Heart right ventricle (tissue), 16 donors: ENCODE measurements at regions of chr1 and their contacts with region 1.

Region 1: GRCh38 chr1:109539676-109540075 is at the start of gene GPR61:
- DNase-seq: no peak
- ATAC-seq: no peak
- H3K4me3 ChIP-seq: no peak within 1 kb of the TSS
- H3K27ac ChIP-seq: no peak within 1 kb of the TSS
- H3K4me1 ChIP-seq: peaks cover 0 to 31% (median 9%) of the 10 kb centered on the region in 9 donors
- H3K27me3 ChIP-seq: no peaks in the 10 kb centered on the region
- CTCF ChIP-seq: no peak
- total RNA-seq, gene GPR61: 0.11 to 1.0 (median 0.31) TPM in 8 of 10 donors, not detected in the others

Region 2: GRCh38 chr1:109620841-109621286 is 81.2 kb after region 1 on chr1:
- intact Hi-C with region 1: loop called in 2 of 10 experiments (anchors 5 kb)
- DNase-seq: peak; percentile 93 to 94
- ATAC-seq: peak; percentile 75 to 90 (median 84)
- H3K4me3 ChIP-seq: peak overlapping the region; percentile 45 to 77 (median 72)
- H3K27ac ChIP-seq: peak overlapping the region; percentile 1 to 97 (median 84)
- H3K4me1 ChIP-seq: peaks cover 9 to 77% (median 57%) of the 10 kb centered on the region in 9 donors
- H3K27me3 ChIP-seq: no peaks in the 10 kb centered on the region
- CTCF ChIP-seq: no peak

Region 3: DNA sequence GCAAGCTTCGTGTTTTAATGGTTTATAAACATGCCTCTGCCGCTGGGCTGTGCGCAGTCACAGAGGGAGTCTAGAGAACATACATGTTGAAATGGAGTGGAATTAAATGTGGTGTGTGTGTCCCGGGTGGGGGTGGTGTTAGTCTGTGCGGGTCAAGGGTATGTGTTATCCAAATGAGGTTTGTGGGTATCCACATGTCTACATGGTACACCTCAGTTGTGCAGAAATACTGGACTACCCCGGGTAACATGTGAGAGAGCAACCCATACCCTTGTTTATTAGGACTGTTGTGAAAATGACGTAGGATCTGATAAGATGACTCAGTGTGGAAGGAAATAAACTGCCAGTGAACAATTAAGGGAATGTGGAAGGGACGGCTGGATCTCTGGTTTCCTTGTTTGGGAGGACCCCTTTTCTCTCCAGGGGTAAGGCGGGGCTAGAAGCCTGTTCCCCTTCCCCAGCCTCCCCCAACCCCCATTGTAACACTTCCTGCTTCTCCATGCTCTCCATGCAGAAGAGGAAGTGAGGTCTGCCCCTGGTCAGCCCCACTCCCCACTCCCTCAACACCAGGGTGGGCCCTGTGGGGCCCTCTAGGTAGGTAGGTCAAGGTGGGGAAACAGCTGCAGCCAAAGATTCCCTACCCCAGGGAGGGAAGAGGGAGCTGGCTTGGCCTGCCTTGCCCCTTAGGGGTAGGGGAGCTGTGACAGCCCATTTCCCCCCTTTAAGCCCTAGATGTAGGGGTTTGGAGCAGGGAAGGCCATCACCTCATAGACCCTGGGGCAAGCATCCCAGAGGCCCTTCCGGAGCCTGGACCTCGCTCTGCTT is 223.4 kb after region 1 on chr1:
- intact Hi-C with region 1: loop called in 1 of 10 experiments (anchors 5 kb)
- DNase-seq: peak in 1 of 2 donors; percentile 5
- ATAC-seq: peak in 2 of 8 donors; percentile 2 to 10
- H3K4me3 ChIP-seq: no peak overlapping the region
- H3K27ac ChIP-seq: peak overlapping the region in 2 of 10 donors; percentile 39 to 73
- H3K4me1 ChIP-seq: peaks cover 0 to 33% (median 12%) of the 10 kb centered on the region in 9 donors
- H3K27me3 ChIP-seq: no peaks in the 10 kb centered on the region
- CTCF ChIP-seq: no peak